ENCODE measurements at regions of chr5 and their contacts with region 1.

Region 1: DNA sequence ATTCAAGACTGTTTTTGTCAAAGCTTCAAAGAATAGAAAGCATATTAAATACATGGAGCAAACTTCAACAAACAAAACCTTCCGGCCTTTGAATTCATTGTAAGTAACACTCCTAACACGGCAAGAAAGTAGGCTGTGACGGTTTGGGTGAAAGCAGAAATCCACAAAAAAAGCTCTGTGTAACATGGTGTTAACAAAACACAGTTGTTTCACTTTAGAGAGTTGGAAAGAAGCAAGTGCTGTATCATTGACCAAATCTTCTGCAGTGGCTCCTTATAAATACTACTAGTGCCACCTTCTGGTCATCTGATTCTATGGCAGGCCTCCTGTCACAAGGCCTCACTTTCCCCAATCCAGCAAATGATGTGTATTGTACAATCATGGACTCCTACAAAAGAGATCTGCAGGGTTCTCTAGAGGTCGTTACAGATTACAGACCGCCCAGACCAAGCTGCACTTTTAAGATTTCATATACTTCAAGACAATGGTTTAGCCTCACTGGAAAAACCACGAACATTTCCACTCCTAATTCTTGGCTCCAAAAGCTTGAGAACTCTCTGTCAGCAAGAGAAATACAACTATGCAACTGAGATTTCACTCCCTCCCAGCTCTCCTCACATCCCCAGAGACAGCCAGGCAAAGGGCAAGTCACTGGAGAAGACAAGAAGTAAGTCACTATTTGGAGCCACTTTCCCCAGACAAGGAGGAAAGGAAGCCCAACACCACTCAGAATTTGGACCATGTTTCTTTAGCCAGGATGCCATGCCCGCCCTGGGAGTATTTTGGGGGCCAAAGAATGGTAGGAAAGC is 196.2 kb downstream of the DTWD2 start:
- DNase-seq: peak; percentile 44 to 55
- H3K4me3 ChIP-seq: no peak overlapping the region
- H3K4me3 Mint-ChIP-seq: no peak overlapping the region
- H3K27ac Mint-ChIP-seq: no peak overlapping the region
- H3K4me1 ChIP-seq: no peaks in the 10 kb centered on the region
- H3K4me1 Mint-ChIP-seq: no peaks in the 10 kb centered on the region
- H3K27me3 ChIP-seq: no peaks in the 10 kb centered on the region
- H3K27me3 Mint-ChIP-seq: peaks cover 7% of the 10 kb centered on the region
- CTCF ChIP-seq: peak; percentile 80 to 83

Region 2: GRCh38 chr5:117590944-117591343 is 1201.2 kb before region 1 on chr5:
- CTCF ChIA-PET with region 1: no interaction called
- POLR2A ChIA-PET with region 1: no interaction called
- intact Hi-C with region 1: loop called (anchors 5 kb)
- DNase-seq: peak in 1 of 2 experiments; percentile 32
- H3K4me3 ChIP-seq: no peak overlapping the region
- H3K4me3 Mint-ChIP-seq: no peak overlapping the region
- H3K27ac Mint-ChIP-seq: no peak overlapping the region
- H3K4me1 ChIP-seq: no peaks in the 10 kb centered on the region
- H3K4me1 Mint-ChIP-seq: no peaks in the 10 kb centered on the region
- H3K27me3 ChIP-seq: no peaks in the 10 kb centered on the region
- H3K27me3 Mint-ChIP-seq: peaks cover 7% of the 10 kb centered on the region
- CTCF ChIP-seq: peak; percentile 44 to 50

Region 3: GRCh38 chr5:118366429-118366828 is 425.7 kb before region 1 on chr5:
- CTCF ChIA-PET with region 1: no interaction called
- POLR2A ChIA-PET with region 1: no interaction called
- intact Hi-C with region 1: loop called (anchors 5 kb)
- DNase-seq: no peak
- H3K4me3 ChIP-seq: no peak overlapping the region
- H3K4me3 Mint-ChIP-seq: no peak overlapping the region
- H3K27ac Mint-ChIP-seq: no peak overlapping the region
- H3K4me1 ChIP-seq: no peaks in the 10 kb centered on the region
- H3K4me1 Mint-ChIP-seq: no peaks in the 10 kb centered on the region
- H3K27me3 ChIP-seq: no peaks in the 10 kb centered on the region; the same call in 1 of the 2 replicates
- H3K27me3 Mint-ChIP-seq: no peaks in the 10 kb centered on the region
- CTCF ChIP-seq: no peak

Region 4: DNA sequence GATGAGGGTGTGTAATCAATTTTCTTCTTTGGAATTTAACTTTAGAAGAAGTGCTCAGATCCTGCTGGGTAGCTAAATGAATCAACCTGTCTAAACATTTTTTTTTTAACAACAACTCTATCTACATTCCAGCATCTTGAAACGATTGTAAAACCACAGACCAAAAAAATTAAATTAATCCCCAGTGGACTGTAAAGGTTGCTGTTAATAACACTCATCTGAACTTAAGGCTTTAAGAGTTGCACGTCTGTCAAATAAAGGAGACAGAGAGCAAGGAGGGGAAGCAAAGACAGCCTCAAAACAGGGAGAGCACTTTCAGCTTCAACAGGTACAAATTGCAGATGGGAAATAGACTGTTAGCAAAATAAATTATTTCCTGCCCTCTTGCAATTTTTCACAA is 352.3 kb before region 1 on chr5:
- CTCF ChIA-PET with region 1: no interaction called
- POLR2A ChIA-PET with region 1: no interaction called
- intact Hi-C with region 1: loop called (anchors 10 kb)
- DNase-seq: no peak
- H3K4me3 ChIP-seq: no peak overlapping the region
- H3K4me3 Mint-ChIP-seq: no peak overlapping the region
- H3K27ac Mint-ChIP-seq: no peak overlapping the region
- H3K4me1 ChIP-seq: no peaks in the 10 kb centered on the region
- H3K4me1 Mint-ChIP-seq: no peaks in the 10 kb centered on the region
- H3K27me3 ChIP-seq: no peaks in the 10 kb centered on the region
- H3K27me3 Mint-ChIP-seq: peaks cover 3% of the 10 kb centered on the region
- CTCF ChIP-seq: no peak

Region 5: DNA sequence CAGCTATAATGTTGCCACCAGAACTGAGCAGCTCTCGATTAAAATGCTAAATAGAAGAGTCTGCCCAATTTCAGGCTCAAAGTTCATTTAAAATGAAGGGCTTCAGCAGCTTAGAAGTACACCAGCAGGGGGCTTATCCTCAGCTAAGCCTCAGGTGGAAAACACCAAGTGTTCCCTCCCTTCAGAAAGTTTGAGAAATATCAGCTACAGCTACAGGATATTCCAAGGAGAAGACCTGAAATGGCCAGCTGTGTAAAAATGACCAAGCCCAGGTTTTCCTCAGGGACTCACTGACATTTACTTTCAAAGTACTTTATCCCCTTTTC is 199.2 kb before region 1 on chr5:
- CTCF ChIA-PET with region 1: no interaction called
- POLR2A ChIA-PET with region 1: no interaction called
- intact Hi-C with region 1: loop called (anchors 1 kb)
- DNase-seq: peak in 1 of 2 experiments; percentile 5
- H3K4me3 ChIP-seq: no peak overlapping the region
- H3K4me3 Mint-ChIP-seq: no peak overlapping the region
- H3K27ac Mint-ChIP-seq: no peak overlapping the region
- H3K4me1 ChIP-seq: no peaks in the 10 kb centered on the region
- H3K4me1 Mint-ChIP-seq: no peaks in the 10 kb centered on the region
- H3K27me3 ChIP-seq: no peaks in the 10 kb centered on the region
- H3K27me3 Mint-ChIP-seq: peaks cover 6% of the 10 kb centered on the region
- CTCF ChIP-seq: peak; percentile 30 to 45

Region 6: GRCh38 chr5:118956727-118957126 is 164.6 kb after region 1 on chr5:
- CTCF ChIA-PET with region 1: no interaction called
- POLR2A ChIA-PET with region 1: no interaction called
- intact Hi-C with region 1: loop called (anchors 1 kb)
- DNase-seq: no peak
- H3K4me3 ChIP-seq: no peak overlapping the region
- H3K4me3 Mint-ChIP-seq: no peak overlapping the region
- H3K27ac Mint-ChIP-seq: no peak overlapping the region
- H3K4me1 ChIP-seq: no peaks in the 10 kb centered on the region
- H3K4me1 Mint-ChIP-seq: no peaks in the 10 kb centered on the region
- H3K27me3 ChIP-seq: no peaks in the 10 kb centered on the region
- H3K27me3 Mint-ChIP-seq: no peaks in the 10 kb centered on the region
- CTCF ChIP-seq: peak; percentile 31 to 42